Gastrocnemius medialis (tissue), 4 donors: ENCODE measurements at regions of chr18 and their contacts with region 1.

Region 1: GRCh38 chr18:44819944-44820510 is 139.3 kb downstream of the SETBP1 start:
- DNase-seq: peak; percentile 88 to 97
- ATAC-seq: peak; percentile 91 to 96
- H3K4me3 ChIP-seq: no peak overlapping the region
- H3K27ac ChIP-seq: peak overlapping the region; percentile 75 to 86 (median 82)
- H3K4me1 ChIP-seq: peaks cover 39 to 52% of the 10 kb centered on the region in 2 donors
- H3K27me3 ChIP-seq: no peaks in the 10 kb centered on the region
- CTCF ChIP-seq: no peak
- POLR2A ChIP-seq: no peak

Region 2: GRCh38 chr18:44733069-44733753 is 86.8 kb before region 1 on chr18:
- in situ Hi-C with region 1: no loop called
- intact Hi-C with region 1: no loop called
- DNase-seq: peak in 1 of 2 donors; percentile 48
- ATAC-seq: peak; percentile 82 to 84
- H3K4me3 ChIP-seq: no peak overlapping the region
- H3K27ac ChIP-seq: peak overlapping the region; percentile 54 to 77 (median 72)
- H3K4me1 ChIP-seq: peaks cover 55 to 61% of the 10 kb centered on the region in 2 donors
- H3K27me3 ChIP-seq: no peaks in the 10 kb centered on the region
- CTCF ChIP-seq: no peak
- POLR2A ChIP-seq: peak; percentile 27 to 33

Region 3: DNA sequence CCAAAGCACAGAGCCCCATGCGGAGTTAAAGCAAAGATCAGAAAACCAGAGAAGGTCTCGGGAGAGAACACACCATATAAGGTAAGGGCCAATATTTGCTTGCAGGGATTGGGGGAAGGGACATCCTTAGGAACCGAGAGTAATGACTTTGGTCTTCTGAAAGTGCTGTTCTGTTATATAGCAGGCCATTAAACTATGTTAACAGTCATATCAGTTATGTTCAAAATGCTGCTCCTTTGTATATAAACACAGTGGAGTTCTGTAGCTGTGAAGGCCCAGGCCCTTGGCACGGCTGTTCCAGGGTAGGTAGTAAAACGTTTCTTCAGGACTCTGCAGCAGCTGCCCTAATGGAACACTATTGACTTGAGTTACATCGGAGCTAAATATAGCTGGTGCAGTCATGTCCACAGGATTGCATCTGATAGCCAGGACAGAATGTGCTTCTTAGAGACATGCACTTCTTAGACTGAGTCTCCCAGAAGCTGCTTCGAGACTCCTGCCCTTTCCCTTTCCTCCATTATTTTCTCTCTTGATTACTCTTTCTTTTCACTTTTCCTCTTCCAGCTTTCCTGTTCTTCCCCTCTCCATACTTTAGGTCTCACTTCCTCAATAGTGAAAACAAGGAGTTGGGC is 16.9 kb before region 1 on chr18:
- in situ Hi-C with region 1: no loop called
- intact Hi-C with region 1: loop called (anchors 2 kb)
- DNase-seq: peak; percentile 87 to 91
- ATAC-seq: peak; percentile 95 to 99
- H3K4me3 ChIP-seq: peak overlapping the region; percentile 15 to 27 (median 18)
- H3K27ac ChIP-seq: peak overlapping the region; percentile 92 to 98 (median 94)
- H3K4me1 ChIP-seq: peaks cover 73 to 86% of the 10 kb centered on the region in 2 donors
- H3K27me3 ChIP-seq: no peaks in the 10 kb centered on the region
- CTCF ChIP-seq: no peak
- POLR2A ChIP-seq: peak; percentile 74 to 86